ENCODE measurements at regions of chr3 and their contacts with region 1.

Region 1: DNA sequence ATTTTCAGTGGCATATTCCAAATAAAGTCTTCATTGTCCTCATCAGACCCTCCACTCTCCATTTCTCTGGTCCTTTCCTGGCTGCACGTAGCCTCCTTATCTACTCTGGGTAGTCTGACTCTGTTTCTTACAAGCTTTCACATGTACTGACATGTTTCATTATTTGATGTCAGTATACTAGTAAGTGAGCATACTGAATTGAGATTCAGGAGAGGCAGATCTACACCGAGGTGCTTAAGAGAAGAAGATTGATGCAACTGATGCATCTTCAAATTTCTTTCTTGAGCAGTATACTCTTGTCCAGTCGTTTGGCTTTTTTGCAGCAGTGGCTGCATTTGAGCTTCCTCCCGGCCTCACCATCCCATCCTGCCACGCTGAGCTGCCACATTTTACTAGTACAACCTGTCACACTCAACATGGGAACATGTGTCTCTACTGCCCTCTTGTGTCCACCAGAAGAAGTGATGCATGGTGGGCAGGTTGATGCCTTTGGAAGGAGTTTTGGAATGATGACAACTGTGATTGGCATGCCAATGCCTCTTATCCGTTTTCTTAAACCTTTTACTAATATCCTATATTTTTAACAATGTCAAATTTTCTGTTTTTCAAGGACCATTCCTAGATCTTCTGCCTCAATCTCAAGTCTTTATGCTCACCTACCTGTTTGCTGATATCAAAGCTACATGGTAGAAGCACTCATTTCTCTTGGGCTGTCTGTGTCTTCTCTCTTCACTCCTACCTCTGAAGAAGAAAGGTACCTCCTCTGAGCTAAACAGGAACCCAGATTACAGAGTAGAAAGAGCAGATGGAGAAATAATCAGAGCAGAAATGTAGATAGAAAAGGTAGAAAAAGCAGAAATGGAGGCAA is 38.7 kb downstream of the GUCA1C start:
- DNase-seq: peak; percentile 67
- H3K4me3 ChIP-seq: no peak overlapping the region
- H3K27ac ChIP-seq: no peak overlapping the region
- H3K4me1 ChIP-seq: peaks cover 10% of the 10 kb centered on the region
- H3K27me3 ChIP-seq: no peaks in the 10 kb centered on the region
- CTCF ChIP-seq: peak; percentile 87 to 96

Region 2: DNA sequence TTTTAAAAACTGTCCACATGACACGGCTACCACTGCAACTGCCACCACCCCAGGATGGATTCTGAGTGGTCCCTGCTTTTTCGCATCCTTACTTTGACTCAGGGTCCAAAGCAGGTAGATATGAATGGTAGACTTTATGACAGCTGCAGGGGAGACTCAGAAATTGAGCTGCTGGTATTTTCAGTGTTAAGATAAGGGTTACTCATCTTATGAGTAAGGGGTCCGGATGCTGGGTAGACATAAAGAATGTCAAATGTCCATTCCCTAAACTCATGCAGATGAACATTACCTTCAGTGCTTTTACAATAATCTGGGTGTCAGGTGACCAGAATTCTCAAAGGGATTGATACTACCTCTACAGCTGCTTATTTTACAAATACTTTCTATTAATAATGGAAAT is 1418.2 kb before region 1 on chr3:
- CTCF ChIA-PET with region 1: no interaction called
- dilution Hi-C with region 1: no loop called
- in situ Hi-C with region 1: no loop called
- intact Hi-C with region 1: loop called (anchors 10 kb)
- DNase-seq: no peak
- H3K4me3 ChIP-seq: no peak overlapping the region
- H3K27ac ChIP-seq: no peak overlapping the region
- H3K4me1 ChIP-seq: no peaks in the 10 kb centered on the region
- H3K27me3 ChIP-seq: peaks cover 5% of the 10 kb centered on the region
- CTCF ChIP-seq: no peak

Region 3: DNA sequence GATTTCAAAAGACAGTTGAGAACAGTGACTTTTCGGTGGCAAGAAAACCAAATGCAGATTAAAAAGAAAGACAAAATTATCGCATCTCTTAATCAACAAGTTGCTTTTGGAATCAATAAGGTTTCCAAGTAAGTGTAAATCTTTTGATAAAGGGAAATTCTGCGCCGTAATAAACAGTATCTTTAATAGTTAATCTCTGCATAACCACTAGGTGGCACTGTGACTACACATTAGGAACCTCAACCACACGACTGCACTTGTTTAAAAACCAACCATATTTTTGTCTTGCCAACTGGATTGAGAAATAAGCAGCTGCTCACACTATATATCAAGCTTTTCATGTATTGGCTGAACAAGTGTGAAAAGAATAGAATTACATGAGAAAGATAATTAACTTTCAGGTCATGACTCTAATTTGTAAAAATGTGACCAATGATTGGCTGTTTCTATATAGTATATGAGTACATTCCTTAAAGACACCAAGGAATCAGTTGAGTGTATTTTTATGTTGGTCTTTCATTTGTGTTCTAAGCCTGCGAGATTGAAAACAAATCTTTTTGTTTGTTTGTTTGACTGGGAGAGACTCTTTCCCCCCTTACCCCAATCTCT is 252.8 kb before region 1 on chr3:
- CTCF ChIA-PET with region 1: interaction called, 4 read pairs
- dilution Hi-C with region 1: no loop called
- in situ Hi-C with region 1: loop called (anchors 10 to 25 kb)
- intact Hi-C with region 1: loop called (anchors 1 kb)
- DNase-seq: peak; percentile 42
- H3K4me3 ChIP-seq: no peak overlapping the region
- H3K27ac ChIP-seq: no peak overlapping the region
- H3K4me1 ChIP-seq: no peaks in the 10 kb centered on the region
- H3K27me3 ChIP-seq: no peaks in the 10 kb centered on the region
- CTCF ChIP-seq: peak; percentile 61 to 62

Region 4: GRCh38 chr3:109081746-109082510 is 166.9 kb after region 1 on chr3:
- CTCF ChIA-PET with region 1: no interaction called
- dilution Hi-C with region 1: no loop called
- in situ Hi-C with region 1: no loop called
- intact Hi-C with region 1: loop called (anchors 1 kb)
- DNase-seq: peak; percentile 75
- H3K4me3 ChIP-seq: no peak overlapping the region
- H3K27ac ChIP-seq: no peak overlapping the region
- H3K4me1 ChIP-seq: no peaks in the 10 kb centered on the region
- H3K27me3 ChIP-seq: no peaks in the 10 kb centered on the region
- CTCF ChIP-seq: peak; percentile 85 to 88

Region 5: DNA sequence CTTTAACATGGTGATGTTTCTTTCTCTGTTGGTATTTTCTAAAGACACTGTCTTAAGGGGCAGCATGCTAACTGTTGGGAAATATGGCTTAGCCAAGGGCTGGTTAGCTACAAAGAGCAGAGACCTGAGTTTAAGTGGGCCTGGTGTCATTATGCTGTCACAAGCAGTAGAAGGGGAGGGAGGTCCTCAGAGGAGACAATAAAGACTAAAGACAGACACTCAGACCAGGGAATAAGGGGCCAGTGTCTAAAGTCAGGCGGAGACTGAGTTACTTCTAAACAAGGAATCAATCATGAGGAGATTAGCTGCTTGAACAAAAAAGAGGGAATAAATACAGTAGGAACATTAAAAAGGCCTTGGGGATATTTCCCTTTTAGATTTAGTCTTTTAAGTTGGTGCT is 565.0 kb after region 1 on chr3:
- CTCF ChIA-PET with region 1: no interaction called
- dilution Hi-C with region 1: no loop called
- in situ Hi-C with region 1: no loop called
- intact Hi-C with region 1: no loop called
- DNase-seq: no peak
- H3K4me3 ChIP-seq: no peak overlapping the region
- H3K27ac ChIP-seq: no peak overlapping the region
- H3K4me1 ChIP-seq: no peaks in the 10 kb centered on the region
- H3K27me3 ChIP-seq: no peaks in the 10 kb centered on the region
- CTCF ChIP-seq: no peak